ENCODE measurements at regions of chr2 and their contacts with region 1.

Region 1: DNA sequence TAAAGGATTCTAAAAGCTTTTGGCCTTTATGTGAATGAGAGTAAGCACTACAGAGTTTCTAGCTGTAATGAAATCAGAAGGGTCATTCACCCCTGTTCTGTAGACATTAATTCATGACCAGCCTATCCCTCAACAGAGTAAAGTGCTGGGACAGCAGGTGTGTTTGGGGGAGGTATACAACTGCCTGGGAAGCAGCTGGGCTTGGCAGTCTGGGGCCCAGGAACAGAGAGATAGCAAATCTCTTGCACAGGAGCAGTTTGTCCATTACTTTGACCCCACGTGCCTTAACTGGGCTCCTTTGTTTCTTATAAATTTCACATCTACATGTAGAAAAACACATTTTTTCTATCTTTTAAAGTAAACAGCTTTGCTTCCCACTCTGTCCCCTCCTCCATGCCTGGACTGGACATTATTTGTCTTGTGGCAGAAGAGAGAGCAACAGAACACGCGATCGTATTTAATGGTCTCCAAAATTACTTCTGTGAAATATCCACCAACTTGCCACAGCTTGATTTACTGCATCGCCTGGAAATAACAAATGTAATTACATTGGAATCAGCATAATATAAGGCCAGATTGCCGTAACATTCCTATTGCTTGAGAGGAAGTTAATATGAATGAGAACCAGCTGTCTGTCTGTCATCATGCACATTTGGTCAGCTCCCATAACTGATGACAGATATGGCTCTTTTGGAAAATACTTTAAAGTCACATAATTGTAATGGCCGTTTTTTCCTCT is 263.8 kb downstream of the RBM43 start:
- DNase-seq: no peak
- H3K4me3 ChIP-seq: no peak overlapping the region
- H3K27ac ChIP-seq: no peak overlapping the region
- H3K4me1 ChIP-seq: no peaks in the 10 kb centered on the region
- H3K27me3 ChIP-seq: no peaks in the 10 kb centered on the region
- CTCF ChIP-seq: no peak
- POLR2A ChIP-seq: no peak

Region 2: DNA sequence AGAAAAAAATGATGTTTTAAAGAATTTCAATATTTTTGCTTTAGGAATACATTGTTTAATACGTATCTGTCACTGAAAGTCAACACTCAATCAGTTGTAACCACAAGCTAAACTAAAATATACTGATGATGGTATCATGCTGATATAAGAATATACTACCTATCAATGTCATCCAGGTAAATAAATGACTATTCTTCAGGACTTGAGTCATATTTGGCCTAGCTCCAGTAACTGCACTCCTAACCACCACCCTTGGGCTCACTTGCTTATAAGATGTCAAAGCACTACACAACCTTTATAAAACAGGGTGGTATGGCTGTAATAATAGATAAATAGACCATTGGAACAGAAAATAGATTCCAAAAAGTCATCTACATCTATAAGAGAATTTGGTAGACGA is 559.2 kb before region 1 on chr2:
- intact Hi-C with region 1: no loop called
- DNase-seq: no peak
- H3K4me3 ChIP-seq: no peak overlapping the region
- H3K27ac ChIP-seq: no peak overlapping the region
- H3K4me1 ChIP-seq: no peaks in the 10 kb centered on the region
- H3K27me3 ChIP-seq: no peaks in the 10 kb centered on the region
- CTCF ChIP-seq: no peak
- POLR2A ChIP-seq: no peak

Region 3: GRCh38 chr2:151021747-151022452 is 24.0 kb after region 1 on chr2:
- intact Hi-C with region 1: loop called in 1 of 2 experiments (anchors 2 kb)
- DNase-seq: no peak
- H3K4me3 ChIP-seq: no peak overlapping the region
- H3K27ac ChIP-seq: no peak overlapping the region
- H3K4me1 ChIP-seq: no peaks in the 10 kb centered on the region
- H3K27me3 ChIP-seq: no peaks in the 10 kb centered on the region
- CTCF ChIP-seq: no peak
- POLR2A ChIP-seq: no peak